ENCODE measurements at regions of chr3 and their contacts with region 1.

Region 1: GRCh38 chr3:20039766-20040475 is at the start of gene KAT2B:
- DNase-seq: peak; percentile 89 to 93 (median 90)
- ATAC-seq: peak; percentile 81
- H3K4me3 ChIP-seq: peak within 1 kb of the TSS; percentile 80
- H3K27ac ChIP-seq: peak within 1 kb of the TSS; percentile 89
- H3K4me1 ChIP-seq: peaks cover 26 to 30% of the 10 kb centered on the region in 2 experiments; a peak in 4 of 5 replicates
- H3K27me3 ChIP-seq: no peaks in the 10 kb centered on the region
- CTCF ChIP-seq: peak; percentile 59 to 84 (median 64)
- EP300 ChIP-seq: no peak
- POLR2A ChIP-seq: peak; percentile 60
- RAD21 ChIP-seq: peak; percentile 57 to 65
- polyA plus RNA-seq, gene KAT2B: 3.3 to 3.5 TPM

Region 2: DNA sequence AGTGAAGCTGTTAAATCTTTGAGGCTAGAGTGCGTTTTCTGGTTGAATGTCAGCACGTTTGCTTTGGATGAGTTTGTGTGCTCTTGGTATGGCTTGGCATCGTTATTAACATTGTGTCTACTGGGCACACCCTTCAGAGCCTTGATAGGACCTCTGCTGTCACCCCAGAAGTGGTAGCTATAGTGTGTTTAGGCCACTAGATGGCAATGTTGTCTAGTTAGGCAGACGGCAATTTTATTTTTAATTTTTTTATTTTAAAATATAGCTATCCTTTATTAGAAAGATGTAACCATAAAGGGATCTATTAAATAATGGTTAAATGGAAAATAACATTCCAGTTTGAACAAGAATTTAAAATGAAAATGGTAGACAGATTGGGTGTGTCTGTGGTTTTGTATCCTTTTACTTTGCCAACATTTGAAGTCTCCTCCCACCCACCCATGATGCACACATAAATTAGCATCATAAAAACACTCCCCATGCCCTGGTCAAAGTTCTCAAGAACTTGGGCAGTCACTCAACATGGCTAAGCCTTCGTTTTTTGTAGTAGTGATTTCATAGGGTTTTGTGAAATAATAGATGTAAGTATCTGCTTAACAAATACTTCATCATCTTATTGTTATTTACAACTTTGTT is 690.9 kb before region 1 on chr3:
- CTCF ChIA-PET with region 1: no interaction called
- POLR2A ChIA-PET with region 1: no interaction called
- in situ Hi-C with region 1: no loop called
- intact Hi-C with region 1: loop called (anchors 2 kb)
- DNase-seq: peak; percentile 16 to 50 (median 40)
- ATAC-seq: peak; percentile 61; the same call in 1 of the 3 replicates
- H3K4me3 ChIP-seq: no peak overlapping the region
- H3K27ac ChIP-seq: no peak overlapping the region
- H3K4me1 ChIP-seq: no peaks in the 10 kb centered on the region
- H3K27me3 ChIP-seq: no peaks in the 10 kb centered on the region
- CTCF ChIP-seq: peak; percentile 48 to 55 (median 50); a peak in 4 of 6 replicates
- EP300 ChIP-seq: no peak
- POLR2A ChIP-seq: no peak
- RAD21 ChIP-seq: peak; percentile 56 to 60

Region 3: DNA sequence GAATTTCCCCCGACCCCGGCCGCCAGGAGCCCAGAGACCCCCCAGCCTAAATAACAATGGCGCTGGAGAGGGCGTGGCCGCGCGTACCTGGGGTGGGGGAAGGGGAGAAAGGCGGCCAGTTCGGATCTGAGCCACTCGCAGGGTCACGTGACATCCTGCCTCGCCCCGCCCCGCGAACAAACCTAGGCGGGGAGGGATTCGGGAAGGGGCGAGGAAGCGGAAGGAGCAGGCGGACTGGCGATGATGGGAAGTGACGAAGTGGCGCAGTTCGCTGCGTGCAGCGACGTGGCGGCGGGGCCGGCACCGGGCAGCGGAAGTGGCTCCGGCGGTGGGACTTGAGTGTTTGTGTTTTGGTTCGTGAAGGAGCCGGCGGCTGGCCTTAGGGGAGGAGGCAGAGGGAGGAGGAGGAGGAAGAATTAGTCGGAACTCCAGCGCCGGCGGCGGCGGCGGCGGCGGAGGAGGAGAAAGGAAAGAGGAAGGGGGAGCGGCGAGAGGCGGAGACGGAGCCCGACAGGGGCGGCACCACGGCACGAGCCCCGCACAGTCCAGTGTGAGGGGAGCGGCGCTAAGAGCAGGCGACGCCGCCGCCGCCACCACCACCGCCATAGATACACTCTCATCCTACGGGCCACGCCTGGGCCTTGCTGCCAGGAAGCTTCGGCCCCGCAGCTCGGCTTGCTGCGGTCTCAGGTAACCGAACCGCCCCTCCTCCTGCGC is 92.9 kb before region 1 on chr3 and contains the start of gene RAB5A:
- CTCF ChIA-PET with region 1: no interaction called
- POLR2A ChIA-PET with region 1: interaction called, 4 read pairs
- in situ Hi-C with region 1: loop called (anchors 5 kb)
- intact Hi-C with region 1: loop called (anchors 1 kb)
- DNase-seq: peak; percentile 94 to 100 (median 97)
- ATAC-seq: peak; percentile 90
- H3K4me3 ChIP-seq: peak within 1 kb of the TSS; percentile 91
- H3K27ac ChIP-seq: peak within 1 kb of the TSS; percentile 98
- H3K4me1 ChIP-seq: peaks cover 9 to 11% of the 10 kb centered on the region in 2 experiments; a peak in 4 of 5 replicates
- H3K27me3 ChIP-seq: no peaks in the 10 kb centered on the region
- CTCF ChIP-seq: 0 out of 6 replicates have a peak, but pooled peaks of 1 of the 3 experiments have one; percentile 1
- EP300 ChIP-seq: no peak; the same call in 1 of the 2 replicates
- POLR2A ChIP-seq: peak; percentile 93
- RAD21 ChIP-seq: peak; percentile 4 to 34; a peak in 2 of 4 replicates
- polyA plus RNA-seq, gene RAB5A: 28.3 to 31.3 TPM

Region 4: DNA sequence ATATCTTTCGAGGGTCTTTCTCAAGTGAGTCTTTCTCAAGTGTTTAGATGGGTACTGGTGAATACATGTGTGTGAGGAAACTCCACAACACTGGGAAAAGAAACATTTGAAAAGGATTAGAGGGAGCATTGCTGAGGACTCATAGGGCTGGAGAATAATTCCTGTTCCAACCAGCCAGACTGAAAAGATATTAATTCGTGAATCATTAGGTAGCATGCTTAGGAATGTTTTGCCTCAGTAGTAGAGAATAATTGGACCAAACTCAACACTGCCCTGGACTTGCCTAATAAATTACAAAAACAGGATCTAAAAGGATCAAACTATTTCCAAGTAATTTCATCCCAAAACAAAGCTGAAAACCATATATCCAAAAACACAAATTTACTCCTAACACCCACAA is 45.1 kb before region 1 on chr3:
- CTCF ChIA-PET with region 1: no interaction called
- POLR2A ChIA-PET with region 1: no interaction called
- in situ Hi-C with region 1: no loop called
- intact Hi-C with region 1: loop called (anchors 5 kb)
- DNase-seq: no peak
- ATAC-seq: no peak
- H3K4me3 ChIP-seq: no peak overlapping the region
- H3K27ac ChIP-seq: no peak overlapping the region
- H3K4me1 ChIP-seq: no peaks in the 10 kb centered on the region
- H3K27me3 ChIP-seq: no peaks in the 10 kb centered on the region
- CTCF ChIP-seq: no peak
- EP300 ChIP-seq: no peak
- POLR2A ChIP-seq: no peak
- RAD21 ChIP-seq: no peak

Region 5: GRCh38 chr3:20051123-20051806 is 11.3 kb after region 1 on chr3:
- CTCF ChIA-PET with region 1: no interaction called
- POLR2A ChIA-PET with region 1: interaction called, 32 read pairs
- in situ Hi-C with region 1: no loop called
- intact Hi-C with region 1: no loop called
- DNase-seq: peak in 1 of 4 experiments; percentile 30
- ATAC-seq: peak; percentile 15; the same call in 1 of the 3 replicates
- H3K4me3 ChIP-seq: no peak overlapping the region
- H3K27ac ChIP-seq: no peak overlapping the region
- H3K4me1 ChIP-seq: peaks cover 0 to 12% of the 10 kb centered on the region in 2 experiments; a peak in 2 of 5 replicates
- H3K27me3 ChIP-seq: no peaks in the 10 kb centered on the region
- CTCF ChIP-seq: no peak
- EP300 ChIP-seq: no peak
- POLR2A ChIP-seq: no peak
- RAD21 ChIP-seq: no peak

Region 6: GRCh38 chr3:20324714-20325478 is 285.0 kb after region 1 on chr3:
- CTCF ChIA-PET with region 1: no interaction called
- POLR2A ChIA-PET with region 1: no interaction called
- in situ Hi-C with region 1: no loop called
- intact Hi-C with region 1: loop called (anchors 10 kb)
- DNase-seq: peak in 1 of 4 experiments; percentile 68
- ATAC-seq: peak; percentile 54
- H3K4me3 ChIP-seq: no peak overlapping the region
- H3K27ac ChIP-seq: peak overlapping the region; percentile 76
- H3K4me1 ChIP-seq: peaks cover 16 to 62% of the 10 kb centered on the region in 2 experiments
- H3K27me3 ChIP-seq: no peaks in the 10 kb centered on the region
- CTCF ChIP-seq: no peak
- EP300 ChIP-seq: peak; percentile 72
- POLR2A ChIP-seq: no peak
- RAD21 ChIP-seq: no peak